GM10248 (cell line): ENCODE measurements at regions of chr2 and their contacts with region 1.

Region 1: GRCh38 chr2:20424300-20425290 is 22.3 kb upstream of the RHOB start:
- DNase-seq: peak; percentile 64
- CTCF ChIP-seq: no peak

Region 2: DNA sequence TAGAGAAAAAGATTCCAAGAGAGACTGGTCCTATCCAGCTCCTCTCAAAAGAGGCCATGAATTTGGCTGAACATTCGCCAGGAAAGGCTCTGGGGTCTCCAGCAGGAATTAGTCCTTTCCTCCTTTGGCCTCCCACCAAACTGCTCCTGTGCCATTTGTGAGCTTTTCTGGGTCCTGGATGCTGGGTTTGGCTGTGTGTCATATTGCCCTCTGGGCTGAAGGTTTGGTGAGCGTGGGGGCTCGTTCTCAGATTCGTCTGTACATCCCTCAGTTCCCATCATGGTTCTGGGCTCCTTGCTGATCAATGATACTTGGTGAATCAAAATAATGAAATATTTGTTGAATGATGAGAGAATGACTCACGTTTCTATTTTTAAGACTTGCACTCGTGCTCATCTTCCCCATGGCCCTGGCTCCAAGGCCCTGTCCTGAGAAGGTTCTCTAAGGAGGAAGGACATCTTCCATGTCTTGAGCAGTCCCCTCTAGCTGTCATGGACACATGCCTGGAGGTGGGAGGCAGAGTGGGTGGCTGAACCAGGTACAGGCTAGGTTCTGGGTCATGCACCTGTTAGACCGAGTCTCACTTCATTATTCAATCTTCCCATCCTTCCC is 25.5 kb before region 1 on chr2:
- CTCF ChIA-PET with region 1: interaction called, 14 read pairs
- POLR2A ChIA-PET with region 1: no interaction called
- DNase-seq: no peak
- CTCF ChIP-seq: no peak

Region 3: GRCh38 chr2:20438334-20439192 is 14.0 kb after region 1 on chr2:
- CTCF ChIA-PET with region 1: interaction called, 28 read pairs
- POLR2A ChIA-PET with region 1: no interaction called
- DNase-seq: no peak
- CTCF ChIP-seq: no peak

Region 4: DNA sequence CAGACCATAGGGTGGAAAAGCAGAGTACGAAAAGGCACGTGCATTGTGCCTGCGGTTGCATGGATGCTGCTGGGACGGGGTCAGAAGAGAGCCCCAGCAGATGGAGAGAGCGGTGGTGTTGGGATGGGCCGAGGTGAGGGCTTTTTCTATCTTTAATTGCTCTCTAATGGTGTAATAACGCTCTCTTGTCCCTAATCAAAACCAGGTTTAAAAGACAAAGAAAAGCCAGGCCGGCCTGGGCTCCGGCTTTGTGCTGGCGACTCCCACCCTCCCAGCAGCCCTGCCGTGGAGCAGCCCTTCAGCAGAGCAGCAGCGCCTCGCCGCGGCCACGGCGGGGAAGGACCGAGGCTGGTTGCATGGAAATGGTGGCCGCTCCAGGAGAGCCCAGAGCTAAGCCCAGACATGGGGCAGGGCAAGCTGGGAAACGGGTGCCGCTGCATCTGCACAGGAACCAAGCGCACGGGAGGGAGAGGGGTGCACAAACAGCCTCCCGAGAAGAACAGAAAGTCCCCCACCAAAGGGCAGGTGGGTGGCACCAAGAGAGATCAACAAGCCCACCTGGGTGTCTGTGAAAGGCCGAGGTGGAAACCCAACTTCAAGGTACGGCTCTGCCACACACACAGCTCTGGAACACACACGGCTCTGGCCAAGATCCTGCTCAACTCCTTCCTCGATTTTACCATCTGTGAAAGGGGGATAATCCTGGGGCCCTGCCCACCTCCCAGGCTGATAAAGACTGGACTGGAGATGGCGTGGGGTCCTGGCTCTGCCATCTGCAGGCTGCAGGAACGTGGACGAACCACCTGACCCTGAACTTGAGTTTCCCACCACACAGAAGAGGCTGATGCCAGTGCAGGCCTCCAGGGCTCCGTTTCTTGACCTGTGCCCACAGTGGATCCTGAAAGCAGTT is 211.3 kb after region 1 on chr2:
- CTCF ChIA-PET with region 1: interaction called, 14 read pairs
- POLR2A ChIA-PET with region 1: no interaction called
- DNase-seq: peak; percentile 83
- CTCF ChIP-seq: peak; percentile 95